BJ (cell line): ENCODE measurements at regions of chr5 and their contacts with region 1.

Region 1: DNA sequence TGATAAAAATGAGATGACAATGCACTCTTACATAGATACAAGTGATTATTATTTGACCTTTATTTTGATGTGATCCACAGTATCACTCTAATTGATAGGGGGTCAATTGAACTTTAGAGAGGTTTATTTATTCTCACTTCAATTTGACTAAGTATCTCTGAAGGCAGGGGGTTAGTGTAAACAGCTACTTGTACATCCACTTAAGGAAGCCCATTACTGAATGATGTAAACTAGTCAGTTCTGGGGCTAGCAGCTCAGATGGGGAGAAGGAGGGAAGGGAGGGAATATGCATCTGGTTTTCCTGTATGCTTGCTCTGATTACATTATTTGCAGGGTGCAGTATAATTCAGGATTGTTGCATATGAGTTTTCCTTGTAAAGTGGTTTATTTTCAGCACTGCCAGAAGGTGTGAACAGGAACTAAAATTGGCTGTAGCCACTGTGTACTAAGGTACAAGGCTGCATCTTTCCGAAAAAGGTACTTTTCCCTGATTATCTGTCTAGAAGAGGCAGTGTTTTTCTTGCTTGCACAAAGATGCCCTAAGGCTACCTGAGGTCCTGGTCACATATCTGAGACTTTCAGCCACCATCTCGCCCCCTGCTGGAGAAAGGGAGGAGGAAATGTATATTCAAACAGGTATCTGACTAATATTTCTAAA is 51.2 kb downstream of the MRPS27 start:
- DNase-seq: no peak
- H3K4me3 ChIP-seq: no peak overlapping the region
- H3K27me3 ChIP-seq: no peaks in the 10 kb centered on the region
- CTCF ChIP-seq: peak; percentile 67

Region 2: GRCh38 chr5:72256536-72256935 is 12.3 kb before region 1 on chr5:
- CTCF ChIA-PET with region 1: interaction called, 13 read pairs
- POLR2A ChIA-PET with region 1: no interaction called
- DNase-seq: no peak
- H3K4me3 ChIP-seq: no peak overlapping the region
- H3K27me3 ChIP-seq: no peaks in the 10 kb centered on the region
- CTCF ChIP-seq: no peak

Region 3: DNA sequence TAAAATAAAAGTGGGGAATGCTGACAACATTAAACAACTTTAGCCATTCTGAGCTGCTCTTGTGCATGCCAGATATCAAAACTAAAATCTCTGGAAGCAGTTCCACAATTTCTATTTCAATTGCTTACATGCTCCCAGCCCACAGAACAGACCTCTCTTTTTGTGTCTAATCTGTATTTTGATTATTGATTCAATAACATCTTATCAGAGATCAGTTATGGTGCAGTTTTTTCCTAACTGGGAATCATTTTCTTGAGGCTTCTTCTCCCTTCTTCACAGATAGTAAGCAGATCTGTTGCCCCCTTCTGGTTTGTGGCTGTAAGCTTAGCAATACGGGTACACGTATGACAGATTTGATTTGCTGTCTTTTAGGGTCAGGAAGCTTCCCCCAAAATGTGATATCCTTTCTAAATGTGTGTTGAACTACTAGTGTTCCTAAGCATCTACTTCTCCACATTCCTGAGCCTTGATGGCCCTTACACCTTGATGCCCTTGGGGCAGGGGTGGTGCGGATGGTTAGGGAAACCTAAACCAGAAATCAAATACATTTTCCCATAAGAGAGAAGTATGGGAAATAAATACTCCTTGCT is 11.8 kb after region 1 on chr5:
- CTCF ChIA-PET with region 1: interaction called, 10 read pairs
- POLR2A ChIA-PET with region 1: no interaction called
- DNase-seq: peak; percentile 17
- H3K4me3 ChIP-seq: no peak overlapping the region
- H3K27me3 ChIP-seq: no peaks in the 10 kb centered on the region
- CTCF ChIP-seq: peak; percentile 70

Region 4: GRCh38 chr5:72427488-72428437 is 158.9 kb after region 1 on chr5:
- CTCF ChIA-PET with region 1: no interaction called
- POLR2A ChIA-PET with region 1: no interaction called
- DNase-seq: peak; percentile 18
- H3K4me3 ChIP-seq: no peak overlapping the region
- H3K27me3 ChIP-seq: no peaks in the 10 kb centered on the region
- CTCF ChIP-seq: no peak